Activated CD8-positive, alpha-beta T cell treated with anti-CD3 and anti-CD28 coated beads for 36 hours (primary cell): ENCODE measurements at regions of chr11 and their contacts with region 1.

Region 1: DNA sequence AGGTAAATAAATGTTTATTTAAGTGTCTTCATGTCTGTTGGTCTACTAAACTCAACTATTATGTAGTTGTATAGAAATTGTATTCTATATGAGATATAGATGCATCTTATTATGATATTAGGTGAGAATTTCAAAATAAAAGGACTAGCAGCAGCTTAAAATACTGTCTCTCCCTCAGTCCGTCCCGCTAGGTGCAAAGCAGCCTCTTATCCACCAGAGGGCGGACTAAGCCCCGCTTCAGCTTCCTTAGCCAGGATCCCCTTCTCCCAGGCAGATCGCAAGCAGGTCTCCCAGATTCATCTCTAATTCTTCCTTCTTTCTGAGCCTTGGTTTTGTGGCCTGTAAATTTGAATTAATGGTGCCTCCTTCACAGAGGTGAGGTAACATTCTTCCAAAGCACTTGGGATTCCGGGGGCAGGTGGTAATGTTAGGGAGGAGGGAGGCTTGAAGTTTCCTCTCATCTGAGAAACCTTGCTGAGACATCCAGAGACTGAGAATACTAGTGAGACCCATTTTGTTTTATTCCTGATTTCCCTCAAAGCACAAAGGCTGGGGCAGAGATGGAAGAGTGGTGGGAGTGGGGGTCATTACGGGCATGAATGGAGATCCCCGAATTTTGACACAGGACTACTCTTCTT is 13.5 kb upstream of the INSC start:
- DNase-seq: peak; percentile 73
- ATAC-seq: peak; percentile 82
- H3K4me3 Mint-ChIP-seq: no peak overlapping the region
- H3K27ac Mint-ChIP-seq: no peak overlapping the region
- H3K4me1 Mint-ChIP-seq: no peaks in the 10 kb centered on the region
- H3K27me3 Mint-ChIP-seq: peaks cover 9% of the 10 kb centered on the region
- CTCF ChIP-seq: peak; percentile 94

Region 2: GRCh38 chr11:15112131-15112541 is 10.9 kb after region 1 on chr11:
- CTCF ChIA-PET with region 1: interaction called, 24 read pairs
- POLR2A ChIA-PET with region 1: interaction called, 5 read pairs
- intact Hi-C with region 1: no loop called
- DNase-seq: no peak
- ATAC-seq: no peak
- H3K4me3 Mint-ChIP-seq: no peak overlapping the region
- H3K27ac Mint-ChIP-seq: no peak overlapping the region
- H3K4me1 Mint-ChIP-seq: peaks cover 9% of the 10 kb centered on the region
- H3K27me3 Mint-ChIP-seq: peaks cover 27% of the 10 kb centered on the region
- CTCF ChIP-seq: no peak

Region 3: GRCh38 chr11:15146271-15147003 is 45.2 kb after region 1 on chr11:
- CTCF ChIA-PET with region 1: interaction called, 14 read pairs
- POLR2A ChIA-PET with region 1: no interaction called
- intact Hi-C with region 1: no loop called
- DNase-seq: no peak
- ATAC-seq: no peak
- H3K4me3 Mint-ChIP-seq: no peak overlapping the region
- H3K27ac Mint-ChIP-seq: no peak overlapping the region
- H3K4me1 Mint-ChIP-seq: peaks cover 8% of the 10 kb centered on the region
- H3K27me3 Mint-ChIP-seq: peaks cover 2% of the 10 kb centered on the region
- CTCF ChIP-seq: no peak

Region 4: GRCh38 chr11:15159085-15159484 is 57.9 kb after region 1 on chr11:
- CTCF ChIA-PET with region 1: interaction called, 10 read pairs
- POLR2A ChIA-PET with region 1: no interaction called
- intact Hi-C with region 1: loop called (anchors 2 kb)
- DNase-seq: no peak
- ATAC-seq: peak; percentile 62
- H3K4me3 Mint-ChIP-seq: no peak overlapping the region
- H3K27ac Mint-ChIP-seq: no peak overlapping the region
- H3K4me1 Mint-ChIP-seq: no peaks in the 10 kb centered on the region
- H3K27me3 Mint-ChIP-seq: no peaks in the 10 kb centered on the region
- CTCF ChIP-seq: peak; percentile 48

Region 5: GRCh38 chr11:15208378-15209222 is 107.4 kb after region 1 on chr11:
- CTCF ChIA-PET with region 1: interaction called, 93 read pairs
- POLR2A ChIA-PET with region 1: no interaction called
- intact Hi-C with region 1: loop called (anchors 1 kb)
- DNase-seq: peak; percentile 82
- ATAC-seq: peak; percentile 96
- H3K4me3 Mint-ChIP-seq: no peak overlapping the region
- H3K27ac Mint-ChIP-seq: no peak overlapping the region
- H3K4me1 Mint-ChIP-seq: no peaks in the 10 kb centered on the region
- H3K27me3 Mint-ChIP-seq: no peaks in the 10 kb centered on the region
- CTCF ChIP-seq: peak; percentile 86